ENCODE measurements at regions of chr17 and their contacts with region 1.

Region 1: GRCh38 chr17:29533976-29534375 is 32.9 kb downstream of the ABHD15 start:
- DNase-seq: no peak
- H3K4me3 ChIP-seq: no peak overlapping the region
- H3K27ac ChIP-seq: no peak overlapping the region
- H3K27me3 ChIP-seq: no peaks in the 10 kb centered on the region
- CTCF ChIP-seq: no peak

Region 2: GRCh38 chr17:29376667-29377270 is 157.2 kb before region 1 on chr17:
- CTCF ChIA-PET with region 1: interaction called, 73 read pairs
- POLR2A ChIA-PET with region 1: no interaction called
- DNase-seq: peak; percentile 67
- H3K4me3 ChIP-seq: peak overlapping the region; percentile 25; the same call in 1 of the 2 replicates
- H3K27ac ChIP-seq: peak overlapping the region; percentile 78
- H3K27me3 ChIP-seq: no peaks in the 10 kb centered on the region
- CTCF ChIP-seq: no peak

Region 3: GRCh38 chr17:29549177-29549923 is 15.4 kb after region 1 on chr17:
- CTCF ChIA-PET with region 1: interaction called, 14 read pairs
- POLR2A ChIA-PET with region 1: no interaction called
- DNase-seq: no peak
- H3K4me3 ChIP-seq: no peak overlapping the region
- H3K27ac ChIP-seq: no peak overlapping the region
- H3K27me3 ChIP-seq: no peaks in the 10 kb centered on the region
- CTCF ChIP-seq: no peak

Region 4: DNA sequence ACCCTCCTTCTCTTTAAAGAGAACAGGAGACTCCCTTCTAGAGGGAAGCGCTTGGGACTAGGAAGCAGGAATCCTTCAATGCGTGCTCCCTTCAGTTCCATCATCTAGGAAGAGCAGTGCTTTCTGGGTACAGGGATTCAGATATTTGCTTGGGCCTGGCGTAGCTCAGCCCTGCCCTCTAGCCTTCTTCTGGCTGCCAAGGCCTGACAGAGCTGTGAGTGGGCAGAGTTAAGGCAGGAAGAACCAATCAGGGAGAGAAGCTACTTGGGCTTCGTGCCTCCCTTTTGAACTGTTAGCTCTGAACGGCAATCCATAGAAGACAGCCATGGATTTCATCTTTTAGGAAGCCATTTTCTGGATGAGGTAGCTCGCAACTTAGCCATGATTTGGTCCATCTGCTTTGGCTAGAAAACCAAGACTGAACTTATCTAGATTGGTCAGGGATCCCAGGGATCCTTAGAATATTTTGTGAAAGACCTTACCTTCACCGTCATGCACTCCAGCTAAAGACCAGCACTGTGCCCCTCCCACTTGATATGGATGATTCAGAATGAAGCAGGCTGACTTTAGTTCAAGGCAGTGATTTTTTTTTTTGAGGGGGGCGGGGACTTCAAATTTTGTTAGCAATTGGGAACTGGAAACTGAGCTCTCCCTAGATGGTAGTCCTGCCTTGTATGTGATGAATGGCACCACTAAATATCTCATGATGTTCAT is 91.2 kb after region 1 on chr17:
- CTCF ChIA-PET with region 1: no interaction called
- POLR2A ChIA-PET with region 1: no interaction called
- DNase-seq: no peak
- H3K4me3 ChIP-seq: no peak overlapping the region
- H3K27ac ChIP-seq: no peak overlapping the region
- H3K27me3 ChIP-seq: no peaks in the 10 kb centered on the region
- CTCF ChIP-seq: no peak